A549 (cell line): ENCODE measurements at regions of chr1 and their contacts with region 1.

Region 1: DNA sequence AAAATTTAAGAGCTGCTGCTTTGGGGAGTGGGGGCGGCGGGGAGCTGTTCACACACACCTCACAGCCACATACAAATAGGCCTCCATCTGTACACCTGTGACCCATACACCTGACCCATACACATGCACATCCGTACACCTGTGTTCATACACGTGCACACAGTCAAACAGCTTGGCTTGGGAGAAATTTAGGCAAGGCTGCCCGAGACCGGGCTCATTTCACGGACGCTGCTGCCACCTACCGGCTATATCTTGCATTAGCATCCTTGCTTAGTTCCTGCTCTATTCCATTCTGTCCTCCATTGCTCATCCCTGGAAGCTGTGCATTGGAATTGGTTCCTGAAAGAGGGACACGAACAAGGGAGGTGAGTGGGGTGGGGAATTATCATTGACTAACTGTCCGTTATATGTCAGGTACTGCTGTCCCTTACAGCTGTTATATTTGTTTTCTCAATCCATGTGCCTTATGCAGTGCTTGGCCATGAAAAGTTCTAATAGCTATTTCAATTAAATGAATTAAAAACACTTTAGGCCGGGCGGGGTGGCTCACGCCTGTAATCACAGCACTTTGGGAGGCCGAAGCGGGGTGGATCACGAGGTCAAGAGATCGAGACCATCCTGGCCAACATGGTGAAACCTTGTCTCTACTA is 37.1 kb upstream of the EPB41 start:
- DNase-seq: peak; percentile 66 to 73
- ATAC-seq: peak; percentile 80 to 86
- H3K4me3 ChIP-seq: no peak overlapping the region
- H3K27ac ChIP-seq: no peak overlapping the region
- H3K4me1 ChIP-seq: peaks cover 6% of the 10 kb centered on the region; the same call in 2 of the 3 replicates
- CTCF ChIP-seq: peak; percentile 73
- EP300 ChIP-seq: no peak
- POLR2A ChIP-seq: no peak
- RAD21 ChIP-seq: peak; percentile 92 to 97

Region 2: DNA sequence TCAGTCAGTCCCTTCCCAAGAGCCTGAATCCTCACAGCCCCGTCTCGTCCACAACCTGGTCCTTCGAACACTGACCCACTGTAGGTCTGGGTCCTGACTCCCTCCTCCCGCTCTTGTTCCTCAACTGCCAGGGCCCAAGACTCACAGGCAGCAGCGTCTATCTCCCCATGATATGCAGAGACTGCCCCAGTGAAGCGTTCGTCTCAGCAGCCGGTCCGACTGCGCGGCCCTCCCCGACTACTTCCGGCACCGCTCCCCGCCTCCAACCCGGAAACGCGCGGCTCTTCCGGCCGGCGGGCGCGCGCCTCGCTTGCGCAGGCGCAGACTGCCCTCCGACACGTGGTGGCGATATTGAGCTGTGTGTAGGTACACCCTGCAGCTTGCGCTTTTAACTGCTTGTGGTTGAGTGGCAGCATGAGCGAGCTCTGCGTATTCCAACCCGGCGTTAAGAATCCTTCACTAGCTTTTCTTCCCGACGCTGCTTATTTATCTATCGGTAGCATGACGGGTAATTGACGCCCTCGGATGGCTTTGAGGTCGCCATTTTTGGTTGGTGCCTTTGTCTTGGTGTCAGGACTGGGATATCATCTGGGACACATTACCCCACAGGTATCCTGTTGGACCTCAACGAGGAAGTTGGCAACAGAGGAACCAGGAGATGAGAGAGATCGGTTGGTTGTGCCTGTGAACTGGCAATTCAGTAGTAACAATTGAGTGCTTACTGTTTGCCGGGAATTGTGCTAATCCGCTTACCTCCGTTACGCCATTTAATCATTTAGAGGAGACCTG is 234.2 kb before region 1 on chr1 and contains the start of gene TAF12:
- CTCF ChIA-PET with region 1: interaction called, 10 read pairs
- POLR2A ChIA-PET with region 1: interaction called, 16 read pairs
- DNase-seq: peak; percentile 82 to 94
- ATAC-seq: peak; percentile 95 to 96
- H3K4me3 ChIP-seq: peak within 1 kb of the TSS; percentile 67
- H3K27ac ChIP-seq: peak within 1 kb of the TSS; percentile 95 to 97
- H3K4me1 ChIP-seq: peaks cover 24% of the 10 kb centered on the region; the same call in 2 of the 3 replicates
- CTCF ChIP-seq: peak; percentile 40
- EP300 ChIP-seq: no peak
- POLR2A ChIP-seq: peak; percentile 99
- RAD21 ChIP-seq: peak; percentile 20 to 45; a peak in 3 of 5 replicates
- polyA plus RNA-seq, gene TAF12: 33.8 and 38.3 TPM in 2 replicates

Region 3: GRCh38 chr1:28775121-28775944 is 101.9 kb before region 1 on chr1:
- CTCF ChIA-PET with region 1: interaction called, 211 read pairs
- POLR2A ChIA-PET with region 1: no interaction called
- DNase-seq: no peak
- ATAC-seq: no peak
- H3K4me3 ChIP-seq: no peak overlapping the region
- H3K27ac ChIP-seq: no peak overlapping the region
- H3K4me1 ChIP-seq: no peaks in the 10 kb centered on the region
- CTCF ChIP-seq: no peak
- EP300 ChIP-seq: no peak
- POLR2A ChIP-seq: no peak
- RAD21 ChIP-seq: no peak

Region 4: GRCh38 chr1:28830814-28831213 is 46.4 kb before region 1 on chr1:
- CTCF ChIA-PET with region 1: interaction called, 11 read pairs
- POLR2A ChIA-PET with region 1: no interaction called
- DNase-seq: no peak
- ATAC-seq: no peak
- H3K4me3 ChIP-seq: no peak overlapping the region
- H3K27ac ChIP-seq: no peak overlapping the region
- H3K4me1 ChIP-seq: no peaks in the 10 kb centered on the region
- CTCF ChIP-seq: no peak
- EP300 ChIP-seq: no peak
- POLR2A ChIP-seq: no peak
- RAD21 ChIP-seq: no peak

Region 5: DNA sequence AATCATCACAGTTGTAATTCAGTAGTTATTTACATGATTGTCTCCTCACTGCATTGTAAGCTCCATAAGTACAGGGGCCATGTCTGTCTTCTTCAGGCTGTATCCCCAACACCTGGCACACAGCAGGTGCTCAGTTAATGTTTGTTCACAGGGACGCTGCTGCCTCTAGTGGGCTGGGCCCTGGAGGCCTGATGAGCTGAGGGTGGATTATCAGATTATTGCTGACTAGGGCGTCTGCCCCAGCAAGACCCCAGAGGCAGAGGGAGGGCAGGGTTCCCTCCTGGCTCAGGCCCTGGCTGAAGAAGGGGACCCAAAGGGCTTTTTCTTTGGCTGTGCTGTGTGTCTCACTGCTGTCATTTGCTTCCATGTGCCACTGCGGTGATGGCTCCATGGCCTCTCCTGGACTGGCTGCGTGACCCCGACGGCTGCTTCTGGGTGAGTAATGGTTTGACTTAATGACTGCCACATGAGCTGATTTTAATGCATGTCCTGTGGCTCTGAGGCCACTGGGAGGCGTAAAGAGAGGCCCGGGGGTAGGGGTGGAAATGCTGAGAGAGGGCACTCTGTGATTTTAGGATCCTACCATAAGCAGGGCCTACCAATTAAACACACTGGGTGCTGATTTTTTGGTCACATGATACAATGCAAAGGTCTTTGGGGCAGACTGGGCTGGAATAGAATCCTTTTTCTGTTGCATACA is 16.3 kb after region 1 on chr1:
- CTCF ChIA-PET with region 1: interaction called, 14 read pairs
- POLR2A ChIA-PET with region 1: no interaction called
- DNase-seq: no peak
- ATAC-seq: peak; percentile 66 to 79; a peak in 5 of 6 replicates
- H3K4me3 ChIP-seq: no peak overlapping the region
- H3K27ac ChIP-seq: no peak overlapping the region
- H3K4me1 ChIP-seq: no peaks in the 10 kb centered on the region
- CTCF ChIP-seq: no peak
- EP300 ChIP-seq: no peak
- POLR2A ChIP-seq: no peak
- RAD21 ChIP-seq: peak in 1 of 2 experiments; percentile 26; a peak in 1 of 5 replicates

Region 6: GRCh38 chr1:28950449-28950848 is 73.2 kb after region 1 on chr1:
- CTCF ChIA-PET with region 1: no interaction called
- POLR2A ChIA-PET with region 1: no interaction called
- DNase-seq: no peak
- ATAC-seq: no peak
- H3K4me3 ChIP-seq: no peak overlapping the region
- H3K27ac ChIP-seq: no peak overlapping the region; a peak in 1 of 6 replicates
- H3K4me1 ChIP-seq: 0 out of 3 replicates have a peak, but pooled peaks cover 2% of the 10 kb centered on the region
- CTCF ChIP-seq: no peak
- EP300 ChIP-seq: no peak
- POLR2A ChIP-seq: no peak
- RAD21 ChIP-seq: no peak

Region 7: DNA sequence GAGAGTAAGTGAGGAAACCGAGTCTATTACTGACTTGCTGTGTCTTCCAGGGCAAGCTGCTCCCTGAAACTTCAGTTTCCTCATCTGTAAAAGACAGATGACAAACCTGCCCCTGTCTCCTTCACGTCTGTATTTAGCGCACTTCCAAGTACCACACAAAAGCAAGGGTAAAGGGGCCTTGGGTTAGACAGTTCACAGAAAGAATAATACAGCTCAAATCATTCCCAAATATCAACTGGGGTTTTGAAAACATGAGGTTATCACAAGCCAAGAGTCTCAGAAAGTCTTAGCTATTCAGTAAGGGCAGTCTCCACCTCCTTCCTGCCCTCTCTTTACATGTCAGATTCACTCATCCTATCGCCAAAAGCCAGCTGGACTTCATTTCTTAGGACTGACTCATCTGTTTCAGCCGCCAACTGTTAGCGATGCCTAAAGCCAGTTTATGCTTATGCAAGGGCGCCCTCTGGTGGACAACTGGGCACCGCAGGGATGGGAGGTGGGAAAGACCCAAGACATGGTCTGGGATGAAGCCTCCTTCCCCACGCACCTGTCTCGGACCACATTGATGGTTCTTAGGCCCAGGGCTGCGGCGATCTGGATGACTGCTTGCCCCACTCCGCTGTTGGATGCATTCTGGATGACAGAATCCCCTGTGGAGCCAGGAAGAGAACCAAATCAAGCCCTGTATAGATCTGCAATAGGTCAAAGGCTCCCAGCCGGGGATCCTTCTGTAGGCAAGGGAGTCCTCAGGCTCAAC is 325.5 kb after region 1 on chr1:
- CTCF ChIA-PET with region 1: interaction called, 23 read pairs
- POLR2A ChIA-PET with region 1: interaction called, 3 read pairs
- DNase-seq: peak; percentile 88 to 90
- ATAC-seq: peak; percentile 96 to 99
- H3K4me3 ChIP-seq: no peak overlapping the region
- H3K27ac ChIP-seq: peak overlapping the region in 1 of 2 experiments; percentile 65; a peak in 3 of 6 replicates
- H3K4me1 ChIP-seq: peaks cover 6% of the 10 kb centered on the region
- CTCF ChIP-seq: peak; percentile 80
- EP300 ChIP-seq: no peak
- POLR2A ChIP-seq: no peak
- RAD21 ChIP-seq: peak; percentile 83 to 91